Activated naive CD4-positive, alpha-beta T cell treated with anti-CD3 and anti-CD28 coated beads for 36 hours (primary cell): ENCODE measurements at regions of chr5 and their contacts with region 1.

Region 1: GRCh38 chr5:68460147-68460798 is 244.7 kb downstream of the PIK3R1 start:
- DNase-seq: peak; percentile 66
- H3K4me3 Mint-ChIP-seq: no peak overlapping the region
- H3K27ac Mint-ChIP-seq: no peak overlapping the region
- H3K4me1 Mint-ChIP-seq: peaks cover 8% of the 10 kb centered on the region
- H3K27me3 Mint-ChIP-seq: no peaks in the 10 kb centered on the region

Region 2: DNA sequence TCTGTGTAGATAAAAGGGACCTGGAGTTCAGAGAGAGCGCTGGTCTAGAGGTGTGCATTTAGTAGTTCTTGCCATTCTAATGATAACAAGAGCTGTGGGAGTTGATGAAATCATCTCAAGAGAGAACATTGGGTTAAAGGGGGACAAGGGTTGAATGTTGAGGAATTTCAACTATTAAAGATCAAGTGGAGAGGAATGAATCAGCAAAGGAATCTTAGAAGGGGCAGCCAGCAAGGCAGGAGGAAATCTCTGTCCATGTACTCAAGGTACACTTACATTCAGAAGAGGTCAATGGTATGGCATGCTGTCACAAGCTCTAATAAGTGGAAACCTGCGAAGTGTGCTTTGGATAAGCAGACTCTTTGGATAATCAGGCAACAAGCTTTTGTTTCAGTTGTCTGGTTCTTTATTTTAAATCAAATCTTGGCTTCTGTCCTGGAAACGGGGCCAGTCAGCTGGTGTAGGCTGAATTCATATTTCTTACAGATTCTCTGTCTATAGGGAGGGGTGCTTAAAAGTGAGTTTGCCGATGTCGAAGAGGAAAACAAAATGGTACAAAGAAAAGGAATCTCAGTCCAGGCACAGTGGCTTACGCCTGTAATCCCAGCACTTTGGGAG is 943.2 kb before region 1 on chr5:
- CTCF ChIA-PET with region 1: no interaction called
- intact Hi-C with region 1: loop called (anchors 10 kb)
- DNase-seq: no peak
- H3K4me3 Mint-ChIP-seq: no peak overlapping the region
- H3K27ac Mint-ChIP-seq: no peak overlapping the region
- H3K4me1 Mint-ChIP-seq: peaks cover 47% of the 10 kb centered on the region
- H3K27me3 Mint-ChIP-seq: no peaks in the 10 kb centered on the region

Region 3: DNA sequence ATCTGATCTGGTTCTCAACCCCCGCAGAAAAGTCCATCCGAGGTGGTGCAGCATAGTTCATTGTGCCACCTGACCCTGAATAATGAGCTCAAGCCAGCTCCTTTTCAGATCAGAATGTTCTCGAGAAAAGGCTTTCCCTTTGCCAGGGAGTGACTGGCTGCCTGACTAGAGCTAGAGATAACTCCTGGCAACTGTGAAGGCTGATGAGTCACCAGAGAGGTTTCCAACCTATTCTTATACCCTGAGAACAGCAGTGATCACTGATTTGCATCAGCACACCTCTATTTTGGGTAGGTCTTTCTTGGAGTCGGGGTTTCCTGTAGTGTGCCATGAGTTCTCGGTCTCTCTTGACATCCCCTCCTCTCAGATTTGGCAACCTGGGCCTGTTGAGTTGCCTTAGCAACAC is 116.8 kb before region 1 on chr5:
- CTCF ChIA-PET with region 1: no interaction called
- intact Hi-C with region 1: loop called (anchors 1 kb)
- DNase-seq: peak; percentile 57
- H3K4me3 Mint-ChIP-seq: no peak overlapping the region
- H3K27ac Mint-ChIP-seq: no peak overlapping the region
- H3K4me1 Mint-ChIP-seq: peaks cover 25% of the 10 kb centered on the region
- H3K27me3 Mint-ChIP-seq: no peaks in the 10 kb centered on the region

Region 4: DNA sequence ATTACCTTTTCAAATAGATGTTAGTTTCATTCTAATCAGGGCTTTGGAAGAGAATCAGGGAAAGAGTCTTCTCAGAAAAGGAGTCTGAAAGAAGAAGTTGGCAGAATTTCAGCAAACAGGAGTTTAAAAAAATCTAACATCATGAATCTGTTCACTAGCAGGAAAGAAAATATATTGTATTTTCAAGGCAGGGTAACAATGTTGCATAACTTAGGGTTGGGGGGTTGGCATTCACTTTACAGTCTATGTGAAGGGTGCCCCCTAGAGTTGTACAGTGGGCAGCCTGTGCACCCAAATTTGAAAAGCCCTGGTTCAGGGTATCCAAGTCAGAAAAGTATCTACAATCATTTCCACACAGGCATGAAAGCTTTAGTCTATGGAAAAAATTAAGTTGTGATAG is 285.2 kb after region 1 on chr5:
- CTCF ChIA-PET with region 1: no interaction called
- intact Hi-C with region 1: loop called (anchors 10 kb)
- DNase-seq: peak; percentile 27
- H3K4me3 Mint-ChIP-seq: no peak overlapping the region
- H3K27ac Mint-ChIP-seq: no peak overlapping the region
- H3K4me1 Mint-ChIP-seq: peaks cover 3% of the 10 kb centered on the region
- H3K27me3 Mint-ChIP-seq: no peaks in the 10 kb centered on the region

Region 5: GRCh38 chr5:69007726-69008368 is 547.6 kb after region 1 on chr5:
- CTCF ChIA-PET with region 1: no interaction called
- intact Hi-C with region 1: loop called (anchors 5 kb)
- DNase-seq: peak; percentile 85
- H3K4me3 Mint-ChIP-seq: no peak overlapping the region
- H3K27ac Mint-ChIP-seq: no peak overlapping the region
- H3K4me1 Mint-ChIP-seq: no peaks in the 10 kb centered on the region
- H3K27me3 Mint-ChIP-seq: peaks cover 3% of the 10 kb centered on the region